ENCODE measurements at regions of chr13 and their contacts with region 1.

Region 1: DNA sequence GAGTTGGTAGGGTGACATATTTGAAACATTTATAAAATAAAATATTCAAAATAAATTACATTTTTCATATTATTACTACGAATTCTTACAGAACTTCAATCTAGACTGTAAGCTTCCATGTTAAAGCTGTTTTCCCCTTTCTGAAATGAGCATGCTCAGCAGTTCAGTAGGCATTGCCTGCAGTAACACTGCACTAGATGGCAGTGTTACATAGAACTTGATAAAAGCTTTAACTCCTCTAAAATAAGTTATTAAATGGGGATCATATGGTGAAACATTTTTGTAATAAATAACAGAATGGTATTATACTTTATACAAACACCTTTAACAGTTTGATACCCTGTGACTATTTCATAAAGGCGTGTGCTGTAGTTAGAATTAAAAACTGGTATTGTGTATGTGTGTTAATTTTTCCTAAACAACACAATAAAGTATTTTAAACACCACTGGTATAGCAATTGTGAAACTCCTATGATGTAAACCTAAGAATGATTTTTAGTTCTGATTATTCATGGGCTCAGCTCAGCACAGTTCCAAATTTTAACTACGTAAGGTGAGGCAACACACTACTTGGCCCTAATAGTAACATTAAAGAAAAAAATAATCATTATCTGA is 11.6 kb upstream of the GPR18 start:
- DNase-seq: peak in 1 of 2 donors; percentile 83
- ATAC-seq: peak; percentile 49 to 70 (median 59)
- H3K4me3 ChIP-seq: no peak overlapping the region
- H3K4me3 Mint-ChIP-seq: no peak overlapping the region
- H3K27ac ChIP-seq: peak overlapping the region; percentile 91
- H3K27ac Mint-ChIP-seq: peak overlapping the region in 1 of 2 donors; percentile 85
- H3K4me1 ChIP-seq: peaks cover 23% of the 10 kb centered on the region
- H3K4me1 Mint-ChIP-seq: peaks cover 42 to 45% of the 10 kb centered on the region in 2 donors
- H3K27me3 ChIP-seq: no peaks in the 10 kb centered on the region
- H3K27me3 Mint-ChIP-seq: no peaks in the 10 kb centered on the region
- CTCF ChIP-seq: peak; percentile 85

Region 2: GRCh38 chr13:99087096-99087953 is 182.4 kb before region 1 on chr13:
- intact Hi-C with region 1: loop called (anchors 5 kb)
- DNase-seq: peak; percentile 86 to 96
- ATAC-seq: peak; percentile 68 to 84 (median 76)
- H3K4me3 ChIP-seq: peak overlapping the region; percentile 66
- H3K4me3 Mint-ChIP-seq: peak overlapping the region; percentile 98
- H3K27ac ChIP-seq: peak overlapping the region; percentile 87
- H3K27ac Mint-ChIP-seq: peak overlapping the region; percentile 95 to 100
- H3K4me1 ChIP-seq: peaks cover 28% of the 10 kb centered on the region
- H3K4me1 Mint-ChIP-seq: peaks cover 26 to 28% of the 10 kb centered on the region in 2 donors
- H3K27me3 ChIP-seq: no peaks in the 10 kb centered on the region
- H3K27me3 Mint-ChIP-seq: peaks cover 8 to 13% of the 10 kb centered on the region in 2 donors
- CTCF ChIP-seq: peak; percentile 38

Region 3: DNA sequence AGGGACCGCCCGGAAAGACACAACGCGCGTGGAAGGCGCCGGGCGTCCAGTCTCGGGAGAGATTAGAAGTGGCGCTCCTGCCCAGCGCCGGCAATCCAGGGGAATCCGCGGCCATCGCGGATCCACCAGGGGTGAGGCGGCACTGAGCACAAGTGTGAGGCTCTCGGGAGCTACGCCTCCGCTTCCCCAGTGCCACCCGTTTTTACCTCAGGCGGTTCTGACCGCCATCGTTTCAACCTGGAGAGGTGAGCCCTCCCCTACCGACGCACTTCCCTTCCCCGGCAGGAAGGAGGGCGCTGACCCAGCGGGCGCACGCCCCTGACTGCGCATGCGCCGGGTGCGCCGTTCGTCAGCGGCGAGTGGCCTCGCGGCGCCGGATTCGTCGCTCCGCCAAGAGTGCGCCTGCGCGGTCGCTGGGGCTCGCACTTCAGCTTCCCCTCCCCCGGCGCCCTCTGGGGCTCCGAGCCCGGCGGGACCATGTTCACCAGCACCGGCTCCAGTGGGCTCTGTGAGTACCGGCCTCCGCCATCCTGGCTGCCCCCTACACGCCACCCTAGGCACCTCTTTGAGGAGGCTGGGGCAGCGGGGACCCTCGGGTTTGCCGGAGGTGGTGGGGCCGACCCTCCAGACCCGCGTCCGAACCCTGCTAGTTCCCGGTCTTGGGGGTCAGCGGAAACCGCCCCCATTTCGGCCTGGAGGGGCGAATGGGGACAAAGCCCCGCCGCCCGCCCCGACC is 69.1 kb before region 1 on chr13 and contains the start of gene UBAC2:
- intact Hi-C with region 1: loop called (anchors 1 kb)
- DNase-seq: peak; percentile 95 to 100
- ATAC-seq: peak; percentile 83 to 93 (median 89)
- H3K4me3 ChIP-seq: peak within 1 kb of the TSS; percentile 97
- H3K4me3 Mint-ChIP-seq: peak within 1 kb of the TSS; percentile 93
- H3K27ac ChIP-seq: peak within 1 kb of the TSS; percentile 99
- H3K27ac Mint-ChIP-seq: peak within 1 kb of the TSS; percentile 92 to 96
- H3K4me1 ChIP-seq: peaks cover 34% of the 10 kb centered on the region
- H3K4me1 Mint-ChIP-seq: peaks cover 53 to 60% of the 10 kb centered on the region in 2 donors
- H3K27me3 ChIP-seq: no peaks in the 10 kb centered on the region
- H3K27me3 Mint-ChIP-seq: no peaks in the 10 kb centered on the region
- CTCF ChIP-seq: no peak
- total RNA-seq, gene UBAC2: 50.6 to 59.1 (median 56.4) TPM

Region 4: DNA sequence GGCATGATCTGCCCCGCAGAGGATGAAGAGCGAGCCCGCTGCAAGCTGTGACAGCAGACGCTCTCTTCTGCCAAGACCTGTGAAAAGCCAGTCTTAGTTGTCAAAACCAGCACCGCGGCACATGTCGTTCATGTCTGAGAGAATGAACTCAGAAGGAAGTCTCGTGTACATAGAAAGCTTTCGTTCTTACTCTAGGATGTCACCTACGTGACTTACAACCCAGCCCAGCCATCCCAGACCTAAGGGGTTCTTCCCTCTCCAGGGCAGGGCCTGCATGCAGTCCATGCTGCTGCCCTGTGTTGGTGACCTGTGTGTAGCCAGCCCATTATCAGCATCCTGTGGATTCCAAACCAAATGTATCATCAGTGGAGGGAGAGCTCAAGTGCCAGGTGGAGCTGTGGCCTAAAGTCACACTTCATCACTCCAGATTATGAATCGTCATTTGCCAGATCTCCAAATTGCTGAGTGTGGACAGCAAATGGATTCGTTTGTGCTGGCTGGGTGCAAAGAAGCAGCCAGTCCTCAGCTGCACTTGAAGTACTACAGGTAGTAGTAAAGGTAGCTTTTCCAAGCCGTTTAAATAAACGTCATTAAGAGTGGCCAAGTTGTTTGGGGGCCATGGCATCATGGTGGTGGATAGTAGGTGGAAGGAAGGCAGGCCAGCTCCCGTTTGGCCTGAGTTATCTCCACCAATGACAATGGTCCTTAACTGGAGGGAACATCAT is 111.3 kb after region 1 on chr13:
- intact Hi-C with region 1: loop called (anchors 5 kb)
- DNase-seq: peak; percentile 55 to 80
- ATAC-seq: peak; percentile 79 to 91 (median 91)
- H3K4me3 ChIP-seq: no peak overlapping the region
- H3K4me3 Mint-ChIP-seq: peak overlapping the region; percentile 75
- H3K27ac ChIP-seq: peak overlapping the region; percentile 63
- H3K27ac Mint-ChIP-seq: peak overlapping the region; percentile 87 to 88
- H3K4me1 ChIP-seq: peaks cover 87% of the 10 kb centered on the region
- H3K4me1 Mint-ChIP-seq: peaks cover 49 to 58% of the 10 kb centered on the region in 2 donors
- H3K27me3 ChIP-seq: no peaks in the 10 kb centered on the region
- H3K27me3 Mint-ChIP-seq: peaks cover 0 to 3% of the 10 kb centered on the region in 2 donors
- CTCF ChIP-seq: no peak